A673 (cell line): ENCODE measurements at regions of chr17 and their contacts with region 1.

Region 1: DNA sequence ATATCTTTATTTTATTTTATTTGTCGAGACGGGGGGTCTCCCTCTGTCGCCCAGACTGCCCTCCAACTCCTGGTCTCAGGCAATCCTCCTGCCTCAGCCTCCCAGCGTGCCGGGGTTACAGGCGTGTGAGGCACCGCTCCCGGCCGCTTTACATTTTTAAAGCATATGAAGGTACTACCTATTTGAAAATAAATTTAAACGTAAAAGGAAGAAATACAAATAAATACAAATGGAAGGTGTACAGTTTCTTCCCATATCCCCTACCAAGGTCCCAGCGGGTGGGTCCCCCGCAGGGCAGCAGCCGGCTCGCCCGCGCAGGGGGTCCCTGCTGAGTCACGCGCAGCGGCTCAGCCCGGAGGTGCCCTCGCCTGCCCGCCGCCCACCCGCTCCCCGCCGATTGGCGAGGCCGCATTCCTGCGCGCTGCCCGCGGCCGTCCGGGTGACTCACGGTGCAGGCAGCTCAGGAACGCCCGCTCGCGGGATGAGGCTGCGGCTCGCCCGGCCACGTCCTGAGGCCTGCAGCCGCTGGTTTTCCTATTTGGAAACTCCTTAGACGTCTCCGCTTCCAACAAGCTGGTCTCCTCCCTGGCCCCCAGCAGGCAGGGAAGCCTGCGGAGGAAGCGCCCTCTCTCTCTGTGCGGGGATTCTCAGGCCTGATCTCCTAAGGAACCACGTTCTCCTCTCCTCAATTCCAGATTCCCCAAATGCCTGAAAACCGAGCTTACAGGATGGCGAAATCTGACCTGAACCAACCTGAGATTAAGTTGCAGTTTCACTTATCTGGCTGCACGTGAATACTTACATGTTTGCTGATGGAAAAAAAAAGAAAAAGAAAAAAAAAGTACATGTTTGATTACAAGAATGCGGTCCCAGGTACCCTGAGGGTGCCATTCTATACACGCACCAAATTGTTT is 54.9 kb upstream of the MAP3K14 start:
- DNase-seq: peak; percentile 82
- H3K4me3 ChIP-seq: peak overlapping the region; percentile 25
- H3K27ac ChIP-seq: peak overlapping the region; percentile 45
- H3K4me1 ChIP-seq: peaks cover 7% of the 10 kb centered on the region
- H3K27me3 ChIP-seq: no peaks in the 10 kb centered on the region
- CTCF ChIP-seq: no peak

Region 2: DNA sequence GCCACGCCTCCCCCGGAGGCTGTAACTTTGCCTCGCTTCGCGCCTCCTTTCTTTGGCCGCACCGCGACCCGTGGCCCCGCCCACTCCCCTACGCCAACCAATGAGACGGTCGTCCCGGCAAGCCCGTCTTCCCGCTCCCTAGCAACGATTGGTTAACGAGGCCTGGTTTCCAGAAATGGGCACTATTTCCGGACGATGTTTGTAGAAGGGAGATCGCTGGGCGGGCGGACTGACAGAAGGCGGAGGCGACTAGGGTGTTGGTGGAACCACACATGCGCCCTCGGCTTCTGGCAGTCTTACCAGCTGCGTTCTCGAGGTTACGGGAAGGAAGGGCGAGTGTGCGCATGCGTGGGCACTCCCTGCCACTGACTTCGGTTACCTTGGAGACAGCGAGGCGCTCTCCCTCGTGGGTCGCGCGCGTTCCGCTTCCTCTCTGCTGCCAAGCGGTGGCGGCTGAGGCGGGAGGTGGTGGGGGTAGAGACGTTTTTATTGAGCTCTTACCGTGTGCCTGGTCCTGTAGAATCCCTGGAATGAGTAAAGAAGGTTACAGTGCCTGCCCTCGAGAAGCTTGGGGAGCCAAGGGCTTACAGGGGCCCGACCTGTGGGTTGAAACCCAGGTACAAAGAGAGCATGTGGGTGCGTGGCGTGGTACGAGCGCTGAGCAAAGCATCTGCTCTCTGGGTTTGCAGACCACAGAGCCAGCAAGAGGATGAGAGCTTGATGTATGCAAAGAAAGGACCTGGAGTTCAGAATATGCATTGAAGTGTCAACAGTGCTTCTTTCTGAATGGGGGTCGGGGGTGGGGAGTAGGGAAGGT is 54.4 kb before region 1 on chr17:
- CTCF ChIA-PET with region 1: no interaction called
- POLR2A ChIA-PET with region 1: no interaction called
- intact Hi-C with region 1: loop called (anchors 10 kb)
- DNase-seq: peak; percentile 98
- H3K4me3 ChIP-seq: peak overlapping the region; percentile 67
- H3K27ac ChIP-seq: peak overlapping the region; percentile 80
- H3K4me1 ChIP-seq: peaks cover 16% of the 10 kb centered on the region
- H3K27me3 ChIP-seq: no peaks in the 10 kb centered on the region
- CTCF ChIP-seq: no peak

Region 3: GRCh38 chr17:45334231-45334630 is 37.4 kb before region 1 on chr17:
- CTCF ChIA-PET with region 1: interaction called, 11 read pairs
- POLR2A ChIA-PET with region 1: no interaction called
- intact Hi-C with region 1: no loop called
- DNase-seq: peak; percentile 39
- H3K4me3 ChIP-seq: no peak overlapping the region
- H3K27ac ChIP-seq: no peak overlapping the region
- H3K4me1 ChIP-seq: no peaks in the 10 kb centered on the region
- H3K27me3 ChIP-seq: no peaks in the 10 kb centered on the region
- CTCF ChIP-seq: no peak